ENCODE measurements at regions of chr20 and their contacts with region 1.

Region 1: GRCh38 chr20:18839507-18840247 is 26.1 kb downstream of the SCP2D1 start:
- DNase-seq: no peak
- ATAC-seq: no peak
- H3K4me3 ChIP-seq: no peak overlapping the region
- H3K27ac ChIP-seq: no peak overlapping the region
- H3K4me1 ChIP-seq: no peaks in the 10 kb centered on the region
- H3K27me3 ChIP-seq: no peaks in the 10 kb centered on the region

Region 2: GRCh38 chr20:18822832-18823231 is 16.8 kb before region 1 on chr20:
- intact Hi-C with region 1: loop called in 1 of 2 experiments (anchors 2 kb)
- DNase-seq: no peak
- ATAC-seq: no peak
- H3K4me3 ChIP-seq: no peak overlapping the region
- H3K27ac ChIP-seq: no peak overlapping the region
- H3K4me1 ChIP-seq: no peaks in the 10 kb centered on the region
- H3K27me3 ChIP-seq: no peaks in the 10 kb centered on the region

Measured in aorta (tissue), 5 donors.